Posterior cingulate gyrus (tissue), 11 donors: ENCODE measurements at regions of chr1 and their contacts with region 1.

Region 1: DNA sequence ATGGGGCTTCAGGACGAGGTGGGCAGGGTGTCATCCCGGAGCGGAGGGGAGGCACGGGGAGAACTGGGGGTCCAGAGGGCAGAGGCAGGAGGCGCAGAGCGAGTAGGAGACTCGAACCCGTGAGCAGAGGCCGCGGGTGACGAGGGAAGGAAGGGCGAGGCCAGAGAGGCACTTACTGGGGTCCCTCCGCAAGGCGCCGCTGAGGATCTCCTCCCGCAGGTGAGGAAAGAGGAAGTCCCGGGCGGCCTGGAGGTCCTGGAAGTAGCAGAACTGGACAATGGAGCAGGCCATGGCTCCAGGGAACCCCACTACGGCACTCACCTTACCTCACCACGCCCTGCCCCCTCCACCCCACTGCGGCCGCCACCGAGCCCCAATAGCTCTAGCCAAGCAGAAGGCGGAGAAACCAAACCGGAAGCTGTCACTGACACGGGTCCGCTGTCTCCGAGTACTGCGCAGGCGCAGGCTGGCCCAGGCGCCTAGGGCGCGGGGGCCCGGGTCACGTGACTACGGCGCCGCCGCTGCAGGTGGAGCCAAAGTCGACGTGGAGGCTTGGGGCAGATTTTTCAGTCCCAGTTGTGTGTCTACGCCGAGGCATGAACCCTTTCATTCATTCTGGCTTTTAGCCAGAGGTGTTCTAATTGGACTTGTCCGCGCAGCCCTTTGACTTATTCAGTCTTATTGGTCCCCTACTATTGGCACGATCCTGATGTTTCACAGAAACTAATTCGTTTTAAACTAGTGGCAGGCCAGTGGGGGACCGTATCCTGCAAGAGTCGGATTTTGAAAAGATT is at the start of gene RAB3GAP2:
- DNase-seq: peak; percentile 88 to 98 (median 93)

Region 2: DNA sequence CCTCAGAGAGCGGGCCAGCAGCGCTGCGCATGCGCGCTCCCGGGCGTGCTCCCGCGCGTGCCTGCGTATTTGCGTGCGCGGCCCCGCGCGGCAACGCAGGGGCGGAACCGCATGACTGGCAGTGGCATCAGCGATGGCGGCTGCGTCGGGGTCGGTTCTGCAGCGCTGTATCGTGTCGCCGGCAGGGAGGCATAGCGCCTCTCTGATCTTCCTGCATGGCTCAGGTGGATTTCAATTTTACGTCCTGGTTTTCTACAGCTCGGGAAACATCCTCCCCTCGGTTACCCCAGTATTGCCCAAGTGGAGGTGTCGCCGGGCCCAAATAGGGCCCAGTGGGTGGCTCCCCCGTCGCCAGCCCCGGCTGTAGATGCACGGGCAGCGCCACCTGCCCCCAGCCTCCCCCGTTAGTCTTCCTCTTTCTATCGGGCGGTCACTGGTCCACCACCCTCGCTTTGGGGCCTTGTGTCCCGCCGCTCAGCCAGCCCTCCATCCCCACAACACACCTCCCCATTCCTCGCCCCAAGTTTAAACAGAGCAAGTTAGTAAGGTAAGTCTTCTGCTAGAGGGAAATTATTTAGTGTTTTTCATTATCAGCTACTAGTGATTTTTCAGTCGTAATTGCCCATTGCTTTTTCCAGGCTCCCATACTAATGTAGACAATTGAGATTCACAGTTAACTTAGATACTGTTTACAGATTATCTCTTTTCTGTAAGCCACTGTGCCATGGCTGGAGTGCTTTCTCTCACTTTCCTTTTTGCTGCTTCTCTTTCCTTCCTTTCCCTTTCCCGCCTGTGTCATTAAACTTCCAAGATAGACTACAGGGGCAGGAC is 1098.3 kb before region 1 on chr1 and contains the start of gene LYPLAL1:
- intact Hi-C with region 1: loop called (anchors 5 kb)
- DNase-seq: peak; percentile 79 to 98 (median 86)

Region 3: GRCh38 chr1:220089650-220090556 is 182.3 kb before region 1 on chr1 and contains the start of gene BPNT1:
- intact Hi-C with region 1: loop called (anchors 5 kb)
- DNase-seq: peak; percentile 85 to 98 (median 92)